ENCODE measurements at regions of chr17 and their contacts with region 1.

Region 1: DNA sequence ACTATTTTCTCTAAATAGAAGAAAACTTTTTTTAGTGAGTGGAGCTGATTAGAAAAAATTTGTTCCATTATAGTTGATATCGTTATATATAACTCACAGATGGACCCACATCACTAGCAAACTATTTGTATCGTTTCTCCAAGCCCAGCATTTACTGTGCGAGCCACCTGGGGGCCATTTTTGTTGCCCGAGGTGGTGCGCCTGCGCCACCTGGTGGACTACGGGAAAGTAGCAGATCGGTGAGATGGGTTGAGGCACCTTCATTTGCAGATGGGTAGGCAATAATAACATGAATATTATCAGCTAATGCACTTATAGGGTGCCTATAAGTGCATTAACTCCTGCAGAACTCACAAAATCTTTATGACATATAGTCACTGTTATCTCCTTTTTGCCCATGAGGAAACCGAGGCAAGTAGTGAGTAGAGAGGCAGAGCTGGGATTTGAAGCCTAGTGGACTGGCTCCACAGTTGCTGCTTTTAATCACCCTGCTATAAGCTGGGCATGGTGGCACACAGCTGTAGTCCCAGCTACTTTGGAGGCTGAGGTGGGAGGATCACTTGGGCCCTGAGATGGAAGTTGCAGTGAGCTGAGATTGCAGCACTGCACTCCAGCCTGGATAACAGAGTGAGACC is 23.2 kb upstream of the NTN1 start:
- DNase-seq: peak; percentile 86
- ATAC-seq: peak; percentile 72
- H3K4me3 Mint-ChIP-seq: no peak overlapping the region
- H3K27ac Mint-ChIP-seq: no peak overlapping the region
- H3K4me1 Mint-ChIP-seq: peaks cover 17% of the 10 kb centered on the region
- H3K27me3 Mint-ChIP-seq: peaks cover 23% of the 10 kb centered on the region
- CTCF ChIP-seq: peak; percentile 95

Region 2: DNA sequence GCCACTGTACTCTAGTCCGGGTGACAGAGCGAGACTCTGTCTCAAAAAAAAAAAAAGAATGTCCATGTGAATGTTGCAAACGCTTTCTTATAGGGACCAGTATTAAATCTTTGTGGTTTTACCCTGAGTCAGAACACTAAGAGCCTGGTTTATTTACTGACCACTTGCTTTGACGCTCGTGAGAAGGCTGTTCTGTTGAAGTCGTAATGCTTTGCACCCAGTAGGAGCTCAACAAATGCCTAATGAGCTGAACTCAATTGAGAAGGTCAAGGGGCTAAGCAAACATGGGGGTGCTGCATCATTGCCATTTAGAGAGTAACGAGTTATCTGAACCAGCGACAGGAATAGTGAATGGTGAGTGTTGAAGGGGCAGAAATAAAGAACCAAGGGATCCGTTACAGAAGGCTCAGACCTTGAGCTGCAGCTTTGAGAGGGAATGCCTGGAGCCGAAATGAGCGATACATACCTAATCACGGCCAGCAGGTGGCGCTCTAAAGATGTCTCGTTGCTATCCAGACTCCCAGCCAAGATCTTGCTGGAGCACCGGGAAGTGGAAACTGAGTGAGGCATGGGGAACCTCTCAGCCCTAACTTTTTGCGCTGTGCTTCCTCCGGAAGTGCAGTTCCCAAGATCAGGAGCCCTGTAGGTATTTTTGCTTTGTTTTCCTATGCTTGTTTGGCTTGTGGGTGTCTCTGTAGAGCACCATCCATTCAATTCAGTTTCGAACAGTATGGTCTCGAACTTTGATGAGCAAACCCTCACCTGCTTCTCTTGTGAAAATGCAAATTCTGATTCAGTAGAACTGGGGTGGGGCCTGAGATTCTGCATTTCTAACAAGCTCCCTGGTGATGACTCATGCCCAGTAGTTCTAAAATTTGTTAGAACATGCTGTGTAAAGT is 587.9 kb before region 1 on chr17:
- CTCF ChIA-PET with region 1: interaction called, 10 read pairs
- POLR2A ChIA-PET with region 1: no interaction called
- intact Hi-C with region 1: no loop called
- DNase-seq: peak; percentile 84
- ATAC-seq: peak; percentile 85
- H3K4me3 Mint-ChIP-seq: no peak overlapping the region
- H3K27ac Mint-ChIP-seq: no peak overlapping the region
- H3K4me1 Mint-ChIP-seq: peaks cover 13% of the 10 kb centered on the region
- H3K27me3 Mint-ChIP-seq: peaks cover 9% of the 10 kb centered on the region
- CTCF ChIP-seq: peak; percentile 96

Region 3: GRCh38 chr17:8806926-8807550 is 191.1 kb before region 1 on chr17:
- CTCF ChIA-PET with region 1: interaction called, 15 read pairs
- POLR2A ChIA-PET with region 1: no interaction called
- intact Hi-C with region 1: no loop called
- DNase-seq: no peak
- ATAC-seq: peak; percentile 61
- H3K4me3 Mint-ChIP-seq: no peak overlapping the region
- H3K27ac Mint-ChIP-seq: no peak overlapping the region
- H3K4me1 Mint-ChIP-seq: peaks cover 9% of the 10 kb centered on the region
- H3K27me3 Mint-ChIP-seq: no peaks in the 10 kb centered on the region
- CTCF ChIP-seq: no peak

Region 4: GRCh38 chr17:8894673-8895578 is 103.2 kb before region 1 on chr17:
- CTCF ChIA-PET with region 1: interaction called, 27 read pairs
- POLR2A ChIA-PET with region 1: interaction called, 4 read pairs
- intact Hi-C with region 1: no loop called
- DNase-seq: peak; percentile 77
- ATAC-seq: peak; percentile 60
- H3K4me3 Mint-ChIP-seq: no peak overlapping the region
- H3K27ac Mint-ChIP-seq: peak overlapping the region; percentile 60
- H3K4me1 Mint-ChIP-seq: peaks cover 69% of the 10 kb centered on the region
- H3K27me3 Mint-ChIP-seq: no peaks in the 10 kb centered on the region
- CTCF ChIP-seq: peak; percentile 84

Region 5: DNA sequence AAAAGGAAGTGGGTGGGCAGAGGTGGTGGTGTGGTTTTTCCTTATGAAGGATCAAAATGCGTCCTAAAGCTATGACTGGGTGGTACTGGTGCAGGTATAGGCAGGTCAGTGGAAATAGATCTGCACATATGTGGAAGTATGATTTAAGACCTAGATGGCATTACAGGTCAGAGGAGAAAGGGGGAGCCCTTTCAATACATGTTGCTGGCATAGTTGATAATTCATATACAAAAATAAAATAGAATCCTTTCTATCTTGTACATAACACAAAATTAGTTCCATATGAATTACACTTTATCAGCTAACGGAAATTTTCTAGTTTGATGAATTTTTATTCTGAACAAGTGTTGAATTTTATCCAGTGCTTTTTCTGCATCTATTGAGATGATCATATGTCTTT is 11.8 kb before region 1 on chr17:
- CTCF ChIA-PET with region 1: interaction called, 25 read pairs
- POLR2A ChIA-PET with region 1: no interaction called
- intact Hi-C with region 1: no loop called
- DNase-seq: no peak
- ATAC-seq: no peak
- H3K4me3 Mint-ChIP-seq: no peak overlapping the region
- H3K27ac Mint-ChIP-seq: no peak overlapping the region
- H3K4me1 Mint-ChIP-seq: peaks cover 17% of the 10 kb centered on the region
- H3K27me3 Mint-ChIP-seq: no peaks in the 10 kb centered on the region
- CTCF ChIP-seq: no peak

Region 6: GRCh38 chr17:9195961-9196716 is 198.0 kb after region 1 on chr17:
- CTCF ChIA-PET with region 1: no interaction called
- POLR2A ChIA-PET with region 1: no interaction called
- intact Hi-C with region 1: no loop called
- DNase-seq: no peak
- ATAC-seq: no peak
- H3K4me3 Mint-ChIP-seq: no peak overlapping the region
- H3K27ac Mint-ChIP-seq: no peak overlapping the region
- H3K4me1 Mint-ChIP-seq: no peaks in the 10 kb centered on the region
- H3K27me3 Mint-ChIP-seq: peaks cover 6% of the 10 kb centered on the region
- CTCF ChIP-seq: no peak

Measured in activated CD8-positive, alpha-beta T cell treated with anti-CD3 and anti-CD28 coated beads for 36 hours (primary cell).